ENCODE measurements at regions of chr10 and their contacts with region 1.

Region 1: GRCh38 chr10:35635576-35635975 is 6.5 kb downstream of the FZD8 start:
- DNase-seq: peak in 1 of 3 donors; percentile 71
- ATAC-seq: peak; percentile 84
- H3K4me3 ChIP-seq: no peak overlapping the region
- H3K4me1 ChIP-seq: peaks cover 9% of the 10 kb centered on the region
- CTCF ChIP-seq: peak; percentile 68

Region 2: GRCh38 chr10:35843524-35844181 is 208.1 kb after region 1 on chr10:
- intact Hi-C with region 1: no loop called
- DNase-seq: no peak
- ATAC-seq: no peak
- H3K4me3 ChIP-seq: no peak overlapping the region
- H3K4me1 ChIP-seq: no peaks in the 10 kb centered on the region
- CTCF ChIP-seq: no peak

Region 3: GRCh38 chr10:36779234-36779846 is 1143.8 kb after region 1 on chr10:
- intact Hi-C with region 1: loop called (anchors 5 kb)
- DNase-seq: peak in 1 of 3 donors; percentile 34
- ATAC-seq: no peak
- H3K4me3 ChIP-seq: no peak overlapping the region
- H3K4me1 ChIP-seq: no peaks in the 10 kb centered on the region
- CTCF ChIP-seq: no peak

Measured in mucosa of descending colon (tissue), 3 donors.